MCF 10A (cell line): ENCODE measurements at regions of chr20 and their contacts with region 1.

Region 1: GRCh38 chr20:3156811-3157619 is 2.6 kb downstream of the FASTKD5 start:
- DNase-seq: no peak
- H3K4me3 Mint-ChIP-seq: peak overlapping the region; percentile 92
- H3K27ac Mint-ChIP-seq: peak overlapping the region; percentile 99
- H3K4me1 Mint-ChIP-seq: peaks cover 19% of the 10 kb centered on the region
- H3K27me3 Mint-ChIP-seq: no peaks in the 10 kb centered on the region
- CTCF ChIP-seq: no peak

Region 2: DNA sequence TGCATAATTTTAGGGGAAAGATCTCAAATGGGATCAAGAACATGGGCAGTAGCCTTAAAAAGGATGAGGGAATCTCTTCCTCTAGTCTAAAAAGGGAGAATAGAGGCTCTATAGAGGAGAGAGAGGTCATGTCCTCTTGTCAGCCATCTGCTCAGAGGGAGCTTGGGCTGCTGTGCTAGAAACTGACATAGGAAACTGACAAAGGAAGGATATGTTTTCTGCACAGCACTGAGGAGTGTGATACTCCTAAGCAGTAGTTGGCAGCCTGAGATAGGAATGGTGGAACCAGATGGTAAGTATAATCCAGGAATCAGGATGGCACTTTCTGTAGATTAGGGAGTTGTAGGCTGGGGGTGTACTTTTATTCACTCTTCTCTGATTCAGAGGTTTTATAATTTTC is 224.5 kb before region 1 on chr20:
- CTCF ChIA-PET with region 1: no interaction called
- POLR2A ChIA-PET with region 1: no interaction called
- intact Hi-C with region 1: no loop called
- DNase-seq: no peak
- H3K4me3 Mint-ChIP-seq: no peak overlapping the region
- H3K27ac Mint-ChIP-seq: no peak overlapping the region
- H3K4me1 Mint-ChIP-seq: no peaks in the 10 kb centered on the region
- H3K27me3 Mint-ChIP-seq: no peaks in the 10 kb centered on the region
- CTCF ChIP-seq: no peak

Region 3: GRCh38 chr20:3115190-3116107 is 41.6 kb before region 1 on chr20:
- CTCF ChIA-PET with region 1: interaction called, 17 read pairs
- POLR2A ChIA-PET with region 1: interaction called, 4 read pairs
- intact Hi-C with region 1: no loop called
- DNase-seq: peak; percentile 52
- H3K4me3 Mint-ChIP-seq: no peak overlapping the region
- H3K27ac Mint-ChIP-seq: no peak overlapping the region
- H3K4me1 Mint-ChIP-seq: peaks cover 8% of the 10 kb centered on the region
- H3K27me3 Mint-ChIP-seq: no peaks in the 10 kb centered on the region
- CTCF ChIP-seq: peak; percentile 47

Region 4: GRCh38 chr20:3173610-3174441 is 16.8 kb after region 1 on chr20:
- CTCF ChIA-PET with region 1: interaction called, 3 read pairs
- POLR2A ChIA-PET with region 1: interaction called, 44 read pairs
- intact Hi-C with region 1: no loop called
- DNase-seq: peak; percentile 83
- H3K4me3 Mint-ChIP-seq: peak overlapping the region; percentile 93
- H3K27ac Mint-ChIP-seq: peak overlapping the region; percentile 86
- H3K4me1 Mint-ChIP-seq: peaks cover 14% of the 10 kb centered on the region
- H3K27me3 Mint-ChIP-seq: no peaks in the 10 kb centered on the region
- CTCF ChIP-seq: peak; percentile 16

Region 5: GRCh38 chr20:3204124-3204822 is 47.3 kb after region 1 on chr20 and contains the start of gene DDRGK1:
- CTCF ChIA-PET with region 1: interaction called, 6 read pairs
- POLR2A ChIA-PET with region 1: interaction called, 25 read pairs
- intact Hi-C with region 1: no loop called
- DNase-seq: peak; percentile 87
- H3K4me3 Mint-ChIP-seq: peak within 1 kb of the TSS; percentile 92
- H3K27ac Mint-ChIP-seq: peak within 1 kb of the TSS; percentile 98
- H3K4me1 Mint-ChIP-seq: no peaks in the 10 kb centered on the region
- H3K27me3 Mint-ChIP-seq: no peaks in the 10 kb centered on the region
- CTCF ChIP-seq: no peak
- total RNA-seq, gene DDRGK1: 116 and 136 TPM in 2 replicates

Region 6: GRCh38 chr20:3239026-3239866 is 82.2 kb after region 1 on chr20 and contains the start of gene SLC4A11:
- CTCF ChIA-PET with region 1: no interaction called
- POLR2A ChIA-PET with region 1: interaction called, 20 read pairs
- intact Hi-C with region 1: no loop called
- DNase-seq: peak; percentile 73
- H3K4me3 Mint-ChIP-seq: peak within 1 kb of the TSS; percentile 86
- H3K27ac Mint-ChIP-seq: no peak within 1 kb of the TSS
- H3K4me1 Mint-ChIP-seq: peaks cover 35% of the 10 kb centered on the region
- H3K27me3 Mint-ChIP-seq: no peaks in the 10 kb centered on the region
- CTCF ChIP-seq: no peak
- total RNA-seq, gene SLC4A11: 4.1 and 5.7 TPM in 2 replicates

Region 7: GRCh38 chr20:4076671-4077070 is 919.7 kb after region 1 on chr20:
- CTCF ChIA-PET with region 1: no interaction called
- POLR2A ChIA-PET with region 1: no interaction called
- intact Hi-C with region 1: no loop called
- DNase-seq: peak; percentile 78
- H3K4me3 Mint-ChIP-seq: no peak overlapping the region
- H3K27ac Mint-ChIP-seq: peak overlapping the region; percentile 44
- H3K4me1 Mint-ChIP-seq: peaks cover 28% of the 10 kb centered on the region
- H3K27me3 Mint-ChIP-seq: no peaks in the 10 kb centered on the region
- CTCF ChIP-seq: no peak